ENCODE measurements at regions of chr13 and their contacts with region 1.

Region 1: DNA sequence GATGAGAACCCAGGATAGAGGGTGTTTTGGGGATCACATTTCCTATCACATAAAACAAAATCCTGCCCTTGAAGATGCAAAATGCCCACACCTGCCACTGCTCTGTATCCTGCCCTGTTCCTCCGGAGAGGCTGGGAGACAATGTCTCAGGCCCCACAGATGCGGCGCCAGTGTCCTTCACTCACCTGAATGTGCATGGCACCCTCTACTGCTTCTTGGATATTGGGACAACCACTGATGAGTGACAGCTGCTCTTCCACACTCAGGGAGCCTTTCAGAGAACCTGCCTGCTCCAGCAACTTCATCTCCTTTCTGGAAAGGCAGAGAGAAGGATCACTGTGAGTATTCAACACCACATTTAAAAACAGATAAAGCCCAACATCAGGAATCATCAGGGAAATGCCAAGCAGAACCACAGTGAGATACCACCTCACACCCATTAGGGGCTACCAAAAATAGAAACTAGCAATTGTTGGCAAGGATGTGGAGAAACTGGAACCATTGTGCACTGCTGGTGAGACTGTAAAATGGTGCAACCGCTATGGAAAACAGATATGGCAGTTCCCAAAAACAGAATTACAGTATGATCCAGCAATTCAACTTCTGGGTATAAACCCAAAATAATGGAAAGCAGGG is 36.4 kb downstream of the CRYL1 start:
- DNase-seq: peak; percentile 69
- H3K4me3 Mint-ChIP-seq: no peak overlapping the region
- H3K27ac Mint-ChIP-seq: no peak overlapping the region
- H3K4me1 Mint-ChIP-seq: no peaks in the 10 kb centered on the region
- H3K27me3 Mint-ChIP-seq: no peaks in the 10 kb centered on the region
- CTCF ChIP-seq: peak; percentile 46

Region 2: DNA sequence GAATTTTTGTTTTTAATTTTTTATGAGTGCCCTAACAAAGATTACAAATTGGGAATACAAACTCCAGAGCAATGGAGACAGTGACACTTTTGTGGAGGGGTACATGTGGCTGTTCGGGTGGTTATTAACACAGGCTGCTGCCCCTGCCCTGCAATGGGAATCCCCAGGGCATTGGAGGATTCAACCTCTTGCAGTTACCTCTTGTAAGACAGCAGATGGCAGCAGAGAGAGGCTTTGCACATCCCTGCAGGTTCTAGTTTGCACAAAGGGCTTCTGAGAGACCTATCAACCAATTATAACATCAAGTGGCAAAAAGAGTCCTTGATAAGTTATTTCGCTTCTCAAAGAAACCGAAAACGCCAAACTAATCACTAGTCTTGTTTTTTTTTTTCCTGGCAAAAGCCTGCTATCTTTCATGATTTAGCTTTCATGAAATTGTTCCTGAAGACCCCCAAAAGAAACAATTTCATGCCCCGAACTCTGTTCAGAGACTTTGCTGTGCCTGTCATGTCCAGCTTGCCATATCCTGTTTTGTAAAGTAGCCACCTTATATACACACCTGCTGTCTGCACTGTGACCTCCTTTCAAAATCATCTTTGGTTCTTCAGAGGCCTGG is 307.0 kb before region 1 on chr13:
- CTCF ChIA-PET with region 1: no interaction called
- intact Hi-C with region 1: loop called (anchors 1 kb)
- DNase-seq: peak; percentile 37
- H3K4me3 Mint-ChIP-seq: no peak overlapping the region
- H3K27ac Mint-ChIP-seq: no peak overlapping the region
- H3K4me1 Mint-ChIP-seq: no peaks in the 10 kb centered on the region
- H3K27me3 Mint-ChIP-seq: no peaks in the 10 kb centered on the region
- CTCF ChIP-seq: peak; percentile 58

Region 3: DNA sequence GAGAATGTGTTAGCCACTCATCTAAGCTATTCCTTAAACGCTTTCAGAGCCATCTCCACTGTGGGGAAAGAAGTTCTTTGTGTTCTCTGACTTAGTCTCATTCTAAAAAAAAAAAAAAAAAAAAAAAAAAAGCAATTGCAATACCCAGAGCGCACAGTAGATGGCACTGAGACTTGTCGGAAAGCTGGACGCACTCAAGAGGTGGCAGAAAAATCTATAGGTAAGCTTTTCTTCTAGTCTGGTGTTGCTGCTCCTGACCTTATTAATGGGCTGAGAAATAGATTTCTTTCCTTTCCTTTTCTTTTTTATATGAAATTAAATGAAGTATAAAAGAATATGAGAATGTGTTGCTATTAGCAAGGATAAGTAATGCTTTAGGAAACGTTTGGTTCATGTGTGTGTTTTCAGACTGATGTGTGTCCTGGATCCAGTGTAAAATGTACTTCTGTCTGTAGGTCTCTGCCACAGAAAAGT is 291.9 kb before region 1 on chr13:
- CTCF ChIA-PET with region 1: interaction called, 10 read pairs
- intact Hi-C with region 1: loop called (anchors 1 kb)
- DNase-seq: no peak
- H3K4me3 Mint-ChIP-seq: no peak overlapping the region
- H3K27ac Mint-ChIP-seq: no peak overlapping the region
- H3K4me1 Mint-ChIP-seq: peaks cover 9% of the 10 kb centered on the region
- H3K27me3 Mint-ChIP-seq: peaks cover 21% of the 10 kb centered on the region
- CTCF ChIP-seq: peak; percentile 55

Region 4: GRCh38 chr13:20320885-20321284 is 168.4 kb before region 1 on chr13:
- CTCF ChIA-PET with region 1: no interaction called
- intact Hi-C with region 1: loop called (anchors 10 kb)
- DNase-seq: no peak
- H3K4me3 Mint-ChIP-seq: no peak overlapping the region
- H3K27ac Mint-ChIP-seq: no peak overlapping the region
- H3K4me1 Mint-ChIP-seq: no peaks in the 10 kb centered on the region
- H3K27me3 Mint-ChIP-seq: peaks cover 37% of the 10 kb centered on the region
- CTCF ChIP-seq: no peak

Region 5: DNA sequence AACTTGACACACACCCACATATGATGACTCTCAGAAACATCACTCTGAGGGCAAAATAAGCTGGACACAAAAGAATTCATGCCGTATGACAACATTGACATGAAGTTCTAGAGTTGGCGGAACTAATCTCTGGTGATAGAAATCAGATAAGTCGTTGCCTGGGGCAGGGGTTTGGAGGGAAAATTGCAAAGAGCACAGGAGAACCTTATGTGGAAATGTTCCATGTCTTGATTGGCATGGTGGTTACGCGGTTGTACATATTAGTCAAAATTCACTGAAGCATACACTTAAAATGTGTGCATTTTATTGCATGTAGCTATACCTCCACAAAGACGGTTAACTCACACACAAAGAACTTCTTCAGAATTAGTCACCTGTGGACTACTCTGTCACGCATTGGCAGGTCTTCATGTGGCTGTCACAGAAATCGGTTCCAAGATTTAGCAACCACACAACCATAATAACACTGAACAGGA is 119.4 kb before region 1 on chr13:
- CTCF ChIA-PET with region 1: no interaction called
- intact Hi-C with region 1: loop called (anchors 10 kb)
- DNase-seq: no peak
- H3K4me3 Mint-ChIP-seq: no peak overlapping the region
- H3K27ac Mint-ChIP-seq: no peak overlapping the region
- H3K4me1 Mint-ChIP-seq: no peaks in the 10 kb centered on the region
- H3K27me3 Mint-ChIP-seq: no peaks in the 10 kb centered on the region
- CTCF ChIP-seq: no peak

Region 6: DNA sequence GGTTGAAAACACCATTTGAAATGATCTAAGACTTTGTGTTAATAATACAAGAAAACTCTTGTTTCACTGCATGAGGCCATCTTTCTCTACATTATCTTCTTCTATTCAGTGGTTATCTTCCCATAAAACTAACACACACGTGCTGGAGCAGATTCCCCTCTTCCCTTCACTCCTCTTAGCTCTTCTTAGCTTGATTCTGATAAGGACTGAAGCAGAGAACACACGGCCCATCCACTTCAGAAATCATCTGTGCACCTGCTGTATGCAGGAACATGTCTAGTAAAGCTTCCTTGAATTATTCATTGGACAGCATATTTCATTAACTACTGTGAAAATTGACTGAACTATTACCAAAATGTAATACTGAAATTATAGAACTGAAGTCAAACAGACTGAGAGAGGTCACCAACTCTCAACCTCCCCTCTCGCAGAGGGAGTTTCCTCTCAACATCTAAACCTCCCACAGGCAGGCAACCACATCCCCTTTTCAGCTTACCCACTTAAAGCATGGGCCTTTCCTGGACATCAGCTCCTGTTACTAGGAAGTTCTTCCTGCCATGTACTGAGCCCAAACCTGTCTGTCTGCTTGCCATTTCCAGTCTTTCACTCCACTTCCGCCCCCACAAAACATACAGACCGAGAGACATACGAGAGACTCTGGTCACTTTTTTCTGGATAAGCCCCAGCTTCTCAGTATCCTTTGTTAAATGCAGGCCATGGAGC is 77.5 kb before region 1 on chr13:
- CTCF ChIA-PET with region 1: no interaction called
- intact Hi-C with region 1: loop called (anchors 10 kb)
- DNase-seq: no peak
- H3K4me3 Mint-ChIP-seq: no peak overlapping the region
- H3K27ac Mint-ChIP-seq: no peak overlapping the region
- H3K4me1 Mint-ChIP-seq: no peaks in the 10 kb centered on the region
- H3K27me3 Mint-ChIP-seq: no peaks in the 10 kb centered on the region
- CTCF ChIP-seq: no peak